ENCODE measurements at regions of chr4 and their contacts with region 1.

Region 1: DNA sequence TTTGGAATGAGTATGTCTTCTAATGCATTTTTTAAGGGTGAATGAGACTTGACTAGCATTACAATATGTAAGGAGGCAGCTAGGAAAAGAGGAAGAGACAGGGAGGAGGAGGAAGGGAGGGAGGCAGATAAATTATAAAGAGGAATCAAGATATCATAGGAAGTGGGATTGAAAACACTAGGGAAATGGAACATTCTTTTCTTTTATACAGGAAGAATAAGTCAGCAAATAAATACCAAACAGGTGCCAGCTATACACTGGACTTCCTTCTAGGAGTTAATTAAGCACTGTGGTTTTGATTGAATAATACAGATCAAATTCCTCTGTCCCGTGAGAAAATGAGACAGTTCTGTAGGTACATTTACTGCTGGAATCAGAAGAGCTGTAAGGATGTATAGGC is 78.6 kb downstream of the PACRGL start:
- DNase-seq: no peak

Region 2: GRCh38 chr4:20323991-20324390 is 454.9 kb before region 1 on chr4:
- intact Hi-C with region 1: no loop called
- DNase-seq: no peak

Region 3: DNA sequence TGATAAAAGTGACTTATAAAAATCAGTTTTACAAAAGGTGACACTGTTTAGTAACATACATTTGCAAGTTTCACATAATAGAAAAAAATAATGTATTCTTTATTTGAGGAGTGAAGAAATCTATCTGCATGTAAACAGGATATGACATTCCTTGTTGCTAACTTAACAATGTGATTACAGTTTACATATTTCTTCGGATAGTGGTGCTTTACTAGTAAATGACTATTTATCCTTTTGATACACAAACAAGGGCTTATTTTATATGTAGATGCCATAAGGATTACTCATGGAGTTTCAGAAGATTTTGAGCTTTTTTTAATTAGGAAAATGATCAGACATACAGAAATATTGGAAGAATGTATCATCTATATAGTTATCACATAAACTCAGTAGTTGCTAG is 400.7 kb before region 1 on chr4:
- intact Hi-C with region 1: no loop called
- DNase-seq: no peak

Region 4: GRCh38 chr4:21469438-21470300 is 690.8 kb after region 1 on chr4:
- intact Hi-C with region 1: loop called (anchors 5 kb)
- DNase-seq: peak in 1 of 42 donors; percentile 20

Measured in head of caudate nucleus (tissue), 42 donors.